ENCODE measurements at regions of chr9 and their contacts with region 1.

Region 1: DNA sequence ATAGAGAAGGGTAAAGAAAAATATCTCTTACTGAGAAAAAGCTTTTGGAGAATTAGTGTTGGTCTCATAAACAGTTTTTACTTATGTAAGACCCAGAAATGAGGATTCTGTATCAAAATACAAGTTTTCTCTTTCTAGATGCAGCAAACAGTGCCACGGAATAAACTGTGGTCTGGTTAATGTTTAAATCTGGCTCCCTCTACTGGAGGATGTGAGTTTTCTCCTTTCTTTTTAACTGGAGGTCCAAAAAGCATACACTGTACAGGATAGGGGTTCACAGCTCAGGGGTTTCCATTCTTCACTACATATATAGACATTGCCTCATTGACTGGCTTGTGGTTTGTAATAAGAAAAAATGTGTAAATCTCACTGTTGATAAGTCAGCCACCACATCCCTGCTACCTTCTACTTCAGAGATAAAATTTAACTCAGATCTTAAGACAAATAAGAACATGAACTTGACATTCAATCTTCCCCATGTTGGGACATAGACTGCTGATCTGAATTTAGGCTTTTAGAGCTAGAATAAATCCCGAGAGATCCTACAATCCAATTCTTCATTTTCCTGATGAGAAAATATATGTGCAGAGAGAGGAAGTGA is 98.9 kb downstream of the CFAP95 start:
- DNase-seq: peak; percentile 78
- H3K4me3 ChIP-seq: no peak overlapping the region
- H3K27ac ChIP-seq: no peak overlapping the region
- H3K4me1 ChIP-seq: no peaks in the 10 kb centered on the region
- H3K27me3 ChIP-seq: peaks cover 26% of the 10 kb centered on the region
- CTCF ChIP-seq: peak; percentile 77

Region 2: DNA sequence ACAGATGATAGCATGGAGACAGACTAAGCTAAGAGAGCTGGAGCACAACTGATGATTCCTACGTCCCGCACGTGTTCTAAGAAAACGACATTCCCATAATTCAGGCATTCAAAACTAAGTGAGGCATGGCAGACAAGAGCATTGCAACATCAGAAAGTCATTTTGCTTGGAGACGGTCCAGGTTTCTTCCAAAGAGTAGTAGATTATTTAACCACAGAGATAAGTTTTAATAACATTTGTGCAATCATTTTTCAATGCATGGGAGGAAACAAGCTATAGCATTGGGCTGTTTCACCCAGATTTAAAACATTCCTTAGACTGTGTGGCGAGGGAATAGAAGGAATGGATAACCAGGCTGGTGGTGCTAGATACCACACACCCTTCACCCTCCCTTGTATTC is 364.6 kb before region 1 on chr9:
- CTCF ChIA-PET with region 1: no interaction called
- POLR2A ChIA-PET with region 1: no interaction called
- intact Hi-C with region 1: loop called (anchors 5 kb)
- DNase-seq: peak; percentile 39
- H3K4me3 ChIP-seq: no peak overlapping the region
- H3K27ac ChIP-seq: no peak overlapping the region
- H3K4me1 ChIP-seq: no peaks in the 10 kb centered on the region
- H3K27me3 ChIP-seq: peaks cover 26% of the 10 kb centered on the region
- CTCF ChIP-seq: no peak

Region 3: GRCh38 chr9:69622676-69623075 is 296.9 kb before region 1 on chr9:
- CTCF ChIA-PET with region 1: no interaction called
- POLR2A ChIA-PET with region 1: no interaction called
- intact Hi-C with region 1: no loop called
- DNase-seq: no peak
- H3K4me3 ChIP-seq: no peak overlapping the region
- H3K27ac ChIP-seq: no peak overlapping the region
- H3K4me1 ChIP-seq: no peaks in the 10 kb centered on the region
- H3K27me3 ChIP-seq: peaks cover 19% of the 10 kb centered on the region
- CTCF ChIP-seq: no peak

Region 4: GRCh38 chr9:69759421-69760277 is 159.9 kb before region 1 on chr9 and contains the start of gene PTAR1:
- CTCF ChIA-PET with region 1: no interaction called
- POLR2A ChIA-PET with region 1: no interaction called
- intact Hi-C with region 1: loop called (anchors 5 kb)
- DNase-seq: peak; percentile 94
- H3K4me3 ChIP-seq: peak within 1 kb of the TSS; percentile 63
- H3K27ac ChIP-seq: peak within 1 kb of the TSS; percentile 94
- H3K4me1 ChIP-seq: peaks cover 12% of the 10 kb centered on the region
- H3K27me3 ChIP-seq: no peaks in the 10 kb centered on the region
- CTCF ChIP-seq: no peak
- total RNA-seq, gene PTAR1: 60.9 and 61.5 TPM in 2 replicates

Region 5: DNA sequence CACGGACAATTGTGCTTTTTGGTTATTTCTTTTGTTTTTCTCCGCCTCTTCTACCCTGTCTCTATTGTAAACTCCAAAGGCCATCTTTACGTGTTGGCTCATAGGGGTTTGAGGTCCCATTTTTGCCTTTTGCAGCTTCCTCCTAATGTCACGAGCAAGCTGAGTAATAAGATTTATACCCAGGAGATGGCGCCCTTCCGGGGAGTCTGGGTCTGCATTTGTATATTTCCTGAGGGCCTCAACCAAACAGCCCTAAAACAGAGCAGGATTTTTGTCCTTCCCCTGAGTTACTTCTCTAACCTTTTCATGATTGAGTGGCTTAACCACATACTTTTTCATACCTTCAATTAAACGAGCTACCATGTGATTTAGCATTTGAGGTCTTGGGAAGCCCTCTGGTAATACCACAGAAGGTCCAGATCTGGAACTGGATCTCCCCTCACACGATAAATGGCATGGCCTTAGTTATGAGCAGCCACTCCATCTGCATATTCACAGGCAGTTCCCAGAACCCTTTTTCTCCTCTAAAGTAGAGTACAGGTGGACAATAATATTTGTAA is 110.2 kb before region 1 on chr9:
- CTCF ChIA-PET with region 1: no interaction called
- POLR2A ChIA-PET with region 1: no interaction called
- intact Hi-C with region 1: loop called (anchors 2 kb)
- DNase-seq: peak; percentile 74
- H3K4me3 ChIP-seq: no peak overlapping the region
- H3K27ac ChIP-seq: peak overlapping the region; percentile 4
- H3K4me1 ChIP-seq: peaks cover 26% of the 10 kb centered on the region
- H3K27me3 ChIP-seq: no peaks in the 10 kb centered on the region
- CTCF ChIP-seq: peak; percentile 64

Measured in A673 (cell line).